Dendritic cell treated with granulocyte-macrophage colony-stimulating factor and Interleukin-4, amounts not matched to agents 40 ng/mL and 50 ng/mL, for 4 days (primary cell): ENCODE measurements at regions of chr1 and their contacts with region 1.

Region 1: GRCh38 chr1:1959840-1960479 is 40.9 kb upstream of the TMEM52 start:
- H3K4me3 Mint-ChIP-seq: no peak overlapping the region
- H3K27ac Mint-ChIP-seq: no peak overlapping the region
- H3K4me1 Mint-ChIP-seq: peaks cover 4% of the 10 kb centered on the region
- H3K27me3 Mint-ChIP-seq: peaks cover 42% of the 10 kb centered on the region

Region 2: DNA sequence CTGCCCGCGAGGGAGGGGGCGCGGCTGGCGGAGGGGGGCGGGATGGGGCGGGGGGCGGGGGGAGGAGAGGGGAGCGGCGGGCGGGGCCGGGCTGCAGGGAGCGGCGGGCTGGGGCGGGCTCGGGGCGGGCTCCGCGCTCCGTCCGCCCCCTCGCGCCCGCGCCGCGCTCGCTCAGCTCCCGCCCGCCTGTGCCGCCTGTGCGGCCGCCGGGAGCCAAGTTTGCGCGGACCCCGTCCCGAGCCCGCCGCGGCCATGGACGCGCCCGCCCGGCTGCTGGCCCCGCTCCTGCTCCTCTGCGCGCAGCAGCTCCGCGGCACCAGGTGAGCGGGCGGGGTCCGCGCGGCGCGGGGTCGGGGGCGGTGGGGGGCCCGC is 59.2 kb after region 1 on chr1 and contains the start of gene GABRD:
- intact Hi-C with region 1: loop called (anchors 10 kb)
- H3K4me3 Mint-ChIP-seq: peak within 1 kb of the TSS; percentile 45
- H3K27ac Mint-ChIP-seq: no peak within 1 kb of the TSS
- H3K4me1 Mint-ChIP-seq: no peaks in the 10 kb centered on the region
- H3K27me3 Mint-ChIP-seq: peaks cover 85% of the 10 kb centered on the region

Region 3: DNA sequence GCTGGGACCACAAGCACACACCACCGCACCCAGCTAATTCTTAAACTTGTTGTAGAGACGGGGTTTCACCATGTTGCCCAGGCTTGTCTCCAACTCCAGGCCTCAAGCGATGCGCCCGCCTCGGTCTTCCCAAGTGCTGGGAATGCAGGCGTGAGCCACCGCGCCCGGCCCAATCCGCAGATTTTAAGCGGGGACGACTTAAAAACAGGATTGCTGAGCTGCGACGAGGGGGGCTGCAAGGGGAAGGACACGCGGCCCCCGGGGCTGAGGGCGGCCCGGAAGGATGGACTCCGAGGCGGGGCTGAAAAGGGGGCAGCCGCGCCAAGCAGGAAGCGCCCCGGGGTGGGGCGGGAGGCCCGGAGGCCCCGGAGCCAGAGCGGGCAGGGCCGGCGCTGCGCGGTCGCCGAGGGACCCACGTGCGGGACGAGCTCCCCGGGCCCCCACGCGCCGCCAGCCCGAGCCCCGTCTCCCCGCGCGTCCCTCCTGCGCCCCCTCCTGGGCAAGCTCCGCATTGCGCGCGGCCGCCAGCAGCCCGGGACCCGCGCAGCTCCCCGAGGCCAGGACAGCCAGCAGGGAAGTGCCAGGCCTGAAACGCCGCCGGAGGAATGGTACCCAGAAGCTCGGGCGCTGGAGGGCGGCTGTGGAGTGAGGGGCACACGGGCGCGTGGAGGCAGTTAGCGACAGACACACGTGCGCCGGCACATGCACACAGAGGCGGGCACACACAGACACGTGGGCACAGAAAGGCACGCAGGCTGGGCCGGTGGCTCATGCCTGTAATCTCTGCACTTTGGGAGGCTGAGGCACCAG is 84.8 kb after region 1 on chr1:
- intact Hi-C with region 1: loop called (anchors 2 kb)
- H3K4me3 Mint-ChIP-seq: peak overlapping the region; percentile 43
- H3K27ac Mint-ChIP-seq: no peak overlapping the region
- H3K4me1 Mint-ChIP-seq: peaks cover 8% of the 10 kb centered on the region
- H3K27me3 Mint-ChIP-seq: peaks cover 68% of the 10 kb centered on the region

Region 4: GRCh38 chr1:2227346-2228153 is 267.6 kb after region 1 on chr1:
- intact Hi-C with region 1: no loop called
- H3K4me3 Mint-ChIP-seq: peak overlapping the region; percentile 55
- H3K27ac Mint-ChIP-seq: peak overlapping the region; percentile 80
- H3K4me1 Mint-ChIP-seq: peaks cover 66% of the 10 kb centered on the region
- H3K27me3 Mint-ChIP-seq: peaks cover 3% of the 10 kb centered on the region